Left ventricle myocardium superior (tissue), 1 donor: ENCODE measurements at regions of chr1 and their contacts with region 1.

Region 1: GRCh38 chr1:235328357-235329138 is at the start of gene GGPS1:
- DNase-seq: peak; percentile 98
- ATAC-seq: peak; percentile 93
- total RNA-seq, gene GGPS1: 29.8 TPM

Region 2: DNA sequence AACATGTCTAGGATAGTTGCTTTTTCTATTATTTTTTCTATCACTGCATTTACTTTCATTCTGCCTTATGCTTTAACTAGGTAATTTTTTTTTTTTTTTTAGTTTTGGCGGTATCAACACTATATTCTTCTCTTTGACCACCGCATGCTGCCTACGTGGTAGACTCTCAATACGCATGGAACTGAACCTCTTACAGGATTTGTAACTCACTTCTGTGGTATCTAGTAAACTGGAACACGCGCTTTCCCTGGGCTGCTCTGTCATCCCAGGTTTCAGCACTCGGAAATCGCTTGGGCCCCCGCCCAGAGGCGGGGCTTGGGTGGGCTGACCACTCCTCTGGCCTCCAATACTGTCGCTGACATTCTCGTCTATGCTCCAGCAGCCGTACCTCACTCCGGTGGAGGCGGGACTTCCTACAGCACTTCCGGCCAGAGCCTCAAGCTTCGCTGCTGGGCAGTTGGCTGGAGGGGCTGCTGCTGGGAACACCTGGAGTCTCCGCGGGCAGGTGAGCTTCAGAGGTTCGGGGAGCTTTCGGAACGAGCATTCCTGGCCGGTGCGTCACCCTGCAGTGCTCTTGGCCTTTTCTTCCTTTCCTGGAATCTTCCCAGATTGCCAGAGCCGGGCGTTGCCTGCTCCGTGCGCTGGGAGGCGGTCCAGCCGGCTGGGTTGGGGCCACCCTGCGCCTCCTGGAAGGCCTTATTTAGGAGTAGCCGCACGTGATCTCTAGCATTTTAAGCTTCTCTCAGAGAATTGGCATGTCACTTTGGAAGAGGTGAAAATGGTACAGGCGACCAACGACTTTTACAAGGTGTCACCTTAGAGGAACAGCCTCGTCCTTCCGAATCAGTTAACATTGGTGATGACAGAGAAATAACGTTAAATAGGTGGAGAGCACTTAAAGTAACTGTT is 38.7 kb after region 1 on chr1 and contains the start of gene TBCE:
- intact Hi-C with region 1: loop called (anchors 5 kb)
- DNase-seq: peak; percentile 98
- ATAC-seq: peak; percentile 100
- total RNA-seq, gene TBCE: 18.7 TPM

Region 3: GRCh38 chr1:235442788-235443429 is 114.4 kb after region 1 on chr1:
- intact Hi-C with region 1: no loop called
- DNase-seq: no peak
- ATAC-seq: no peak